AG04449 (cell line): ENCODE measurements at regions of chr22 and their contacts with region 1.

Region 1: DNA sequence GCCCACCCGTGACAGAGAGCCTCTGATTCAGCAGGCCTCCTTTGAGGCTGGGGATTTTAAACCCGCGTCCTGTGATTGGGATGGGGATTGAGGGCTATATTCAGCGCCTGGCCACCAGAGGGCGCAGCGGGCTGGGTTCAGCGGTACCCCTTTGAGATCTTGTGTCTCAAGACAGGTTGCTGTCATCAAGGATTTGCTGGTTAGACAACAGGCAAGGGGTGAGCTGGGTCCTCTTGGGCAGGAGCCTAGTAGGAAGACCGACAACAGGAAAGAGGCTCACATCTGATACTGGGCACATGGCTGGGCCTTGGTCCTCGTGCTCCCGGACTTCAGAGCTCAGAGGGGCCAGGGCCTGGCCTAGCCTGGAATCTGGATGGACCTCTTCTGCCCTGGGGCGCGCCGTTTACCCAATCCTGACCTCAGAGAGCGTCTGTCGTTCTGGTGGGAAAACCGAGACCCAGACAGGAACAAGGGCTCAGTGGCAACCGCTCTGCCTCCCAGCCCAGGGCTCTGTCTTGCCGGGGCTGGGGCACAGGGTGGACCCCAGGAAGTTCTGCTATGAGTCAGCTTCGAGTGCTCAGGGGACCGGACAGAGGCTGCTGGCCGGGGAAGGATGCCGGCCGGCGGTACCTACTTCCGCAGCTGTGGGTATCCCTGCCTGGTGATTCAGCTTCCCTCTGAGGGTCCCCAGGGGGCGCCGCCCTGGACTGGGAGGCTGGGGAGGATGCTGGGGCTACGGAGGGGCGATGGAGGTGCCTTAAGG is 929 bp upstream of the SLC35E4 start:
- DNase-seq: peak; percentile 54
- H3K4me3 ChIP-seq: peak overlapping the region; percentile 42
- CTCF ChIP-seq: peak; percentile 92

Region 2: GRCh38 chr22:30606455-30607299 is 28.0 kb before region 1 on chr22 and contains the start of gene TCN2:
- CTCF ChIA-PET with region 1: interaction called, 61 read pairs
- POLR2A ChIA-PET with region 1: interaction called, 3 read pairs
- DNase-seq: no peak
- H3K4me3 ChIP-seq: peak within 1 kb of the TSS; percentile 59
- CTCF ChIP-seq: no peak

Region 3: DNA sequence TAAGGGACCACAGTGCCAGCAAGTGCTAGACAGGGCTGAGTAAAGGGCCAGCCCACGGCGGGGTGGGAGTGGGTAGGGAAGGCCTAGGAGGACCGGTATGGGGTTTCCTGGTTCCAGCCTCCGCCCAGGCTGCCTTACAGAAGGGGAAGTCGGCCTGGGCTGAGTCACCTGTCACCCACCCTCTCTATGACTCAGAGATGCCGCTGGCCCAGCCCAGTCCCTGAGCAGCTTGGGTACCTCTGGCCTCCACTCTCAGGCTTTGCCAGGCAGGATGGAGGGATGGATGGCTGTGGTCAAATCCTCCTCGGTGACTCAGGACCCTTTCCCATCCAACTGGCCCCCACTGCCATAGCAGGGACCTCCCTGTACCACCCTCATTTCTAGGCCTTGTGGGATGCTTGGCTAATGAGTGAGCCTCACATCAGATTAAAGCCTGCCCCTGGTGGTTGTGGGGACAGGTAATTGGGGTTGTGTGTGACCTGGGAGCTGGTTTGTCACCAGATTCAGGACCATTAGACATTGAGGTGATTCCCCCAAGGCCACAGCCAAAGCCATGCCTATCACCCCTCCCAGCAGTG is 14.9 kb after region 1 on chr22:
- CTCF ChIA-PET with region 1: interaction called, 37 read pairs
- POLR2A ChIA-PET with region 1: interaction called, 4 read pairs
- DNase-seq: no peak
- H3K4me3 ChIP-seq: no peak overlapping the region
- CTCF ChIP-seq: no peak

Region 4: GRCh38 chr22:30667494-30668385 is 33.1 kb after region 1 on chr22 and contains the start of gene DUSP18:
- CTCF ChIA-PET with region 1: interaction called, 16 read pairs
- POLR2A ChIA-PET with region 1: no interaction called
- DNase-seq: no peak
- H3K4me3 ChIP-seq: peak within 1 kb of the TSS; percentile 90
- CTCF ChIP-seq: peak; percentile 36

Region 5: GRCh38 chr22:30733181-30733631 is 98.6 kb after region 1 on chr22:
- CTCF ChIA-PET with region 1: interaction called, 16 read pairs
- POLR2A ChIA-PET with region 1: no interaction called
- DNase-seq: no peak
- H3K4me3 ChIP-seq: no peak overlapping the region
- CTCF ChIP-seq: no peak

Region 6: DNA sequence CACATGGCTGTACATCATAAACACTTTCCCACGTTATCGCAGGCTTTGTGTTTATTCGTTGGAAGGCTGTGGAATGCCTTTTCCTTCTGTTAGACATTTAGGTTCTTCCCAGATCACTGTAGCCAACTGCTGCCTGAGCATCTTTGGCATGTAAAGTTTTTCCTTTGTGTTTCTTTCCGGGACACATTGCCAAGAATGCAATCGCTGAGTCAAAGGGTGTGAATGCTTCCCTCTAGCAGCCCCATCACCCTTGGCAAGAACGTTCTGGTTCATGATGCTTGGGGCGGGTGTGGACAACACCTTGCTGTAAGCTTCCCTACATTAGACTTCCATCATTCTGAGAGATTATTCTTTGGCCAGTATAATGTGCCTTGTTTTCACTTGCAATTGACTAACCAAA is 196.3 kb after region 1 on chr22:
- CTCF ChIA-PET with region 1: no interaction called
- POLR2A ChIA-PET with region 1: no interaction called
- DNase-seq: peak; percentile 83
- H3K4me3 ChIP-seq: no peak overlapping the region
- CTCF ChIP-seq: no peak